Head of caudate nucleus (tissue), 42 donors: ENCODE measurements at regions of chr6 and their contacts with region 1.

Region 1: DNA sequence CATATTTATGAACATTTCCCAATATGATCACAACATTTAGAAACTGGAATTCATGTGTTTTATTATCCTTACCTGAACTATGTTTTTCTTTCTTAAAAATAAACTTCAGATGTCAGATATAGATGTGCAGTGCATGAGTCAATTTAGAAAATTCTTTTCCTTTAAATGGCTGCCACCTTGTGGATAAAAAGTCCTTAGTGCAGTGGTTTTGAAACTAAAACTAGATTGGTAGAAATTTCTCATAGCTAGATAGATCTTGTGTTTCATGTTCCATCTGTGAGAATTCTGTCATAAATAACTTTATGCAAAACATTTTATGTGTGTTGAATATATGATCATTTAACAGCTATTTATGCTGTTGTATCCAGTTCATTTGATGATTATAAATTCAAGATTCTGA is 134.9 kb downstream of the KLHL32 start:
- DNase-seq: no peak

Region 2: GRCh38 chr6:96626759-96627364 is 432.6 kb before region 1 on chr6:
- intact Hi-C with region 1: loop called (anchors 5 kb)
- DNase-seq: no peak